ENCODE measurements at regions of chr9 and their contacts with region 1.

Region 1: DNA sequence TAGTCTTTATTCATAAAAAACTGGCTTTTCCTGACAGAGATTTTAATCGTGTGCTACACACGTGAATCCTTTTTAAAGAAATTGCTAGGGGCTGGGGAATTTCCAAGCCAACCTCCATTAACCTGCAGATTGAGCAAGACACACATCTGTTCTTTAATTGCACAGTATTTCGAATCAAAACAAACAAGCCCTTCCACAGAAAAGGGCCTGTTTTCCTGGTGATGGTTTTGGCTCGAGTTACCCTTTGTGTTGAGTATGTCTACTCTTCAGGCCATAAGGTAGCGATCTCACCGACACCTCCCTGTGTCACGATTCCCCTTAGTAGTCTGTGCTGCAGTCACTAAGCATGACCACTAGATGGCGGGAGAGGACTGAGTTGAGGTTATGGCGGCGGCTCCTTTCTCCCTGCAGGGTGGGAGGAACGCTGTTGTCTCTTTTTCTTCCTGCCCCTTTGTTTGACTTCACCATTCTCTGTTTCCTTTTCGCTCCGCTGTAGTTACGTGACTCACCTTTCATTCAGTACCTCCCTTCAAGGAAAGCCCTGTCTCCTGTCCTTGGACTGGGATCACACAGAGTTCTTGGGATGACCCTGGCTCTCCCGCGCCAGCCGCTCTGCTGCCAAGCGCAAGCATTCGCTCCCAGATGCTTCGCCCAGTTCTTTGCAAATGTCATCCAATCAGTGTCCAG is 137.1 kb upstream of the SLC24A2 start:
- DNase-seq: peak; percentile 37
- ATAC-seq: peak; percentile 99
- H3K4me3 Mint-ChIP-seq: peak overlapping the region; percentile 49
- H3K27ac Mint-ChIP-seq: no peak overlapping the region
- H3K4me1 Mint-ChIP-seq: peaks cover 11% of the 10 kb centered on the region
- H3K27me3 Mint-ChIP-seq: peaks cover 19% of the 10 kb centered on the region
- CTCF ChIP-seq: no peak

Region 2: DNA sequence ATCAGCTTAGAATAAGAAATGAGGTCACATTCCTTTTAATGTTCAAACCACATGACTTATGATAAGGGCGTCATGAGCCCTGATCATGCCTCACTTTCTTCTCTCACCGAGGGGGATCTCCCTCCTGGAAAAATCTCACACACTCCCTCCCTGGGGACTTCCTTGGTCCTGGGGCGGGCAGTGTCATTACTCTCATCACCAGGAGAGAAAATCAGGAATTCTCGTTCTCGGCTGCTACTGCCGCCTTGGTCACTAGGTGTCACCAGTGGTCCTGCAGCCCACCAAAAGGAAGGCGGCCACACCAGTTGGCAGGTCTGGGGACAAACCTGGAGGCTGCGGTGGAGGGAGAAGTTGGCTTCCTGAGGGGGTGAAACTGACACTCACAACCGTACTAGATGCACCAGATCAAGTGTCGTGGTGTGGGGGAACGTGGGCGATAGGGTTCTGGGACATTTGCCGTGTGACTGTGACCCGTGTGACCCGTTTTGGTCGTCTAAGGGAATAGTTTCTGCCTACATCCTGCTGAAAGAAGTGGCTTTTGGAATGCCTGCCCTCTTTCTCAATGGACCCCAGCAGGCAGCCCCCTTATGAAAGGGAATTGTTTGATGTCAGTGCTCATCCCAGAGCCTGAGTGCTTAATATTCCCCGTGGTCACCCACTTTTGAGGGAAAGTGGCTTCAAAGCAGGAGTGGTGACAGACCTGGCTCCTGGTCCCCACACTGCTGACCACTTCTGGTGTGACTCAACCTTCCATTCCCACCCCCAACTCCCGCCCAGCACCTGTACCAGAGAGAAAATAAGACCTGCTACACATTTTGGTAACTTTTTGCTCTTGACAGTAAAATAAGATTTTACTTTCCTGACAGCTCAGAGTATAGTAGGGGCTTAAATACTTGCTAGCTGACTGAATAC is 454.0 kb before region 1 on chr9:
- CTCF ChIA-PET with region 1: no interaction called
- POLR2A ChIA-PET with region 1: no interaction called
- intact Hi-C with region 1: loop called (anchors 5 kb)
- DNase-seq: no peak
- ATAC-seq: peak; percentile 79
- H3K4me3 Mint-ChIP-seq: peak overlapping the region; percentile 78
- H3K27ac Mint-ChIP-seq: no peak overlapping the region
- H3K4me1 Mint-ChIP-seq: peaks cover 4% of the 10 kb centered on the region
- H3K27me3 Mint-ChIP-seq: no peaks in the 10 kb centered on the region
- CTCF ChIP-seq: no peak

Region 3: DNA sequence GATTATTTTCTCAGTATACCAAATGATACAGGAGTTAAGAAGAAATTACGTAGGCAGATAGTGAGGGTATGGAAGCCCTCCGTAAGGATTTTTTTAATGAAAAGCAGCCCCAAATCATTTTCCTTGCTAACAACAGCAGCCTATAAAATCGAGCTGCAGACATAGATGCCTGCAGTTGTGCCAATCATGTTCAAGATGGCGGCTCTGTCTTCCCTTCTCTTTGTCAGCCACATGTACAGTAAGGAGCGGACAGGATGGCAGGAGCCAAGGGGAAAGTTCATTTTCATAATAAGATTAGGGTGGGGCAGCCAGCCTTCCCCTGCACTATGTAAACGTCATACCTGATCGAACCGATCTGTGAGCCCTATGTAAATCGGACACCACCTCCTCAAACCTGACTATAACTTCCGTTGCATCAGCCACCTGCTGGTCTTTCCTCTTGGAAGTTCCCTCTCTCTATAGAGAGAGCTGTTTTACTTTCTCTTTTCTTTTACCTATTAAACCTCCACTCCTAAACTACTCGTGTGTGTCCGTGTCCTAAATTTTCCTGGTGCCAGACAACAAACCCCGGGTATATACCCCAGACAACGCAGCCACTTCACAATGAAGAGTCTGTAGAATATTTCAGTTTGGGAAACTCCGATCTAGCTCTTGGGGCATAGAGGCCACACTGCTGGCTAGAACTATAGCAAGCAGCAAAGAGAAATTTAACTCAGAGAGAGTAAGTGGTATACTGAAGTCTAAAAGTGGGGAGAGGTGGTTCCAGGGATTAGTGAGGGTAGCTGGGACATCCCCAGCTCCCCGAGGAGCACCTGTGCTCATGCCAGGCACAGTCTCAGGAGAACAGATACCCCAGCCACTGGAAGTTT is 116.3 kb before region 1 on chr9:
- CTCF ChIA-PET with region 1: no interaction called
- POLR2A ChIA-PET with region 1: no interaction called
- intact Hi-C with region 1: no loop called
- DNase-seq: no peak
- ATAC-seq: no peak
- H3K4me3 Mint-ChIP-seq: no peak overlapping the region
- H3K27ac Mint-ChIP-seq: no peak overlapping the region
- H3K4me1 Mint-ChIP-seq: no peaks in the 10 kb centered on the region
- H3K27me3 Mint-ChIP-seq: no peaks in the 10 kb centered on the region
- CTCF ChIP-seq: no peak

Region 4: DNA sequence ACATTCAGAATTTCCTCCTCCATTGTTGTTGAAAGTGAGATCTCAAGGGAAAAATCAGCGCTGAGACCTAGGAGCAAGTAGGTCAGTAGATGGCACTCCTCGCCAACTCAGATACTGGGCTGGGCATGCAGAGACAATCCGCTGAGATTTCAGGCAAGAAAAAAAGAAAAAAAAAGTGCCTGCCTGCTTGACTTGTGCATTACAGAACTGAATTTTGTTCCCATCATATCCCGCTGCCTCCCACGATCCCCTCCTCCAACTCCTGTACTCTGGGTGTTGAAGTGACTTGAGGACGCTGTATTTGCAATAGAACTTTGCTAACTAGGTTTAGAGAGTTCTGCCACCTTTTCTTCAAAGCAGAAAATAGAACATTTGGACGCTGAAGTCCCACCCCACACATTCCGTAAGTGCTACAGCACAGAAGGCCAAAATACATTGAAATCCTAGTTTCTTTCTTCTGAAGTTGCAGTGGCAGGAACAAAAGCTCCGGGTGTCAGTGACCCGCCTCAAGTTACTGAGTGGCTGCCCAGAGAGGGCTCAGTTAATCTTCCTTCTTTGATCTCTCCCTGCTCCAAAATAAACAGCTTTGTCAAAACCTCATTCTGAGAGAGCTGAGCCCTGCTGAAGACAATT is 430.6 kb after region 1 on chr9:
- CTCF ChIA-PET with region 1: no interaction called
- POLR2A ChIA-PET with region 1: no interaction called
- intact Hi-C with region 1: loop called (anchors 10 kb)
- DNase-seq: no peak
- ATAC-seq: no peak
- H3K4me3 Mint-ChIP-seq: no peak overlapping the region
- H3K27ac Mint-ChIP-seq: no peak overlapping the region
- H3K4me1 Mint-ChIP-seq: no peaks in the 10 kb centered on the region
- H3K27me3 Mint-ChIP-seq: peaks cover 2% of the 10 kb centered on the region
- CTCF ChIP-seq: no peak

Region 5: GRCh38 chr9:20407012-20407411 is 481.1 kb after region 1 on chr9:
- CTCF ChIA-PET with region 1: no interaction called
- POLR2A ChIA-PET with region 1: no interaction called
- intact Hi-C with region 1: loop called (anchors 10 kb)
- DNase-seq: no peak
- ATAC-seq: no peak
- H3K4me3 Mint-ChIP-seq: no peak overlapping the region
- H3K27ac Mint-ChIP-seq: no peak overlapping the region
- H3K4me1 Mint-ChIP-seq: no peaks in the 10 kb centered on the region
- H3K27me3 Mint-ChIP-seq: peaks cover 2% of the 10 kb centered on the region
- CTCF ChIP-seq: no peak

Region 6: GRCh38 chr9:20884985-20885593 is 959.1 kb after region 1 on chr9:
- CTCF ChIA-PET with region 1: no interaction called
- POLR2A ChIA-PET with region 1: no interaction called
- intact Hi-C with region 1: loop called (anchors 5 kb)
- DNase-seq: no peak
- ATAC-seq: no peak
- H3K4me3 Mint-ChIP-seq: no peak overlapping the region
- H3K27ac Mint-ChIP-seq: no peak overlapping the region
- H3K4me1 Mint-ChIP-seq: no peaks in the 10 kb centered on the region
- H3K27me3 Mint-ChIP-seq: no peaks in the 10 kb centered on the region
- CTCF ChIP-seq: no peak

Measured in activated B cell treated with CpG ODN at 0.5 μM for 24 hours (primary cell).